Spleen (tissue), 13 donors: ENCODE measurements at regions of chr16 and their contacts with region 1.

Region 1: GRCh38 chr16:2500918-2501750 is 12.6 kb upstream of the ATP6V0C start:
- DNase-seq: peak; percentile 95
- H3K4me3 ChIP-seq: peak overlapping the region in 3 of 8 donors; percentile 15 to 57 (median 22)
- H3K27ac ChIP-seq: peak overlapping the region in 2 of 8 donors; percentile 0 to 32
- H3K4me1 ChIP-seq: peaks cover 10 to 46% (median 24%) of the 10 kb centered on the region in 6 donors
- H3K27me3 ChIP-seq: no peaks in the 10 kb centered on the region
- CTCF ChIP-seq: peak; percentile 96 to 100 (median 99)
- POLR2A ChIP-seq: no peak

Region 2: DNA sequence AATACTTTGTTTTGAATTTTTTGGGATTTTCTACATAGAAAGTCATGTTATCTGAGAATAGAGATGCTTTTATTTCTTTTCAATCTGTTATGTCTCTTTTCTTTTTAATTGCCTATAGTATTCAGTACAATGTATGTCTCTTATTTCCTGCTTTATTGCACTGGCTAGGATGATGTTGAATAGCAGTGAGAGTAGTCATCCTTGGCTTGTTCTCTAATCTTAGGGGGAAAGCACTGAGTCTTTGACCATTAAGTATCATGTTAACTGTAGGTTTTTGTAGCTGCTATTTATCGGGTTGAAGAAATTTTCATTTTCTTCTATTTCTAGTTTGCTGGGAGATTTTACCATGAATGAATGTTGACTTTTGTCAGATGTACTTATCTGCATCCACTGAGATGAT is 150.6 kb before region 1 on chr16:
- intact Hi-C with region 1: loop called (anchors 5 kb)
- DNase-seq: no peak
- H3K4me3 ChIP-seq: no peak overlapping the region
- H3K27ac ChIP-seq: no peak overlapping the region
- H3K4me1 ChIP-seq: no peaks in the 10 kb centered on the region
- H3K27me3 ChIP-seq: peaks cover 0 to 24% (median 0%) of the 10 kb centered on the region in 7 donors
- CTCF ChIP-seq: no peak
- POLR2A ChIP-seq: no peak

Region 3: DNA sequence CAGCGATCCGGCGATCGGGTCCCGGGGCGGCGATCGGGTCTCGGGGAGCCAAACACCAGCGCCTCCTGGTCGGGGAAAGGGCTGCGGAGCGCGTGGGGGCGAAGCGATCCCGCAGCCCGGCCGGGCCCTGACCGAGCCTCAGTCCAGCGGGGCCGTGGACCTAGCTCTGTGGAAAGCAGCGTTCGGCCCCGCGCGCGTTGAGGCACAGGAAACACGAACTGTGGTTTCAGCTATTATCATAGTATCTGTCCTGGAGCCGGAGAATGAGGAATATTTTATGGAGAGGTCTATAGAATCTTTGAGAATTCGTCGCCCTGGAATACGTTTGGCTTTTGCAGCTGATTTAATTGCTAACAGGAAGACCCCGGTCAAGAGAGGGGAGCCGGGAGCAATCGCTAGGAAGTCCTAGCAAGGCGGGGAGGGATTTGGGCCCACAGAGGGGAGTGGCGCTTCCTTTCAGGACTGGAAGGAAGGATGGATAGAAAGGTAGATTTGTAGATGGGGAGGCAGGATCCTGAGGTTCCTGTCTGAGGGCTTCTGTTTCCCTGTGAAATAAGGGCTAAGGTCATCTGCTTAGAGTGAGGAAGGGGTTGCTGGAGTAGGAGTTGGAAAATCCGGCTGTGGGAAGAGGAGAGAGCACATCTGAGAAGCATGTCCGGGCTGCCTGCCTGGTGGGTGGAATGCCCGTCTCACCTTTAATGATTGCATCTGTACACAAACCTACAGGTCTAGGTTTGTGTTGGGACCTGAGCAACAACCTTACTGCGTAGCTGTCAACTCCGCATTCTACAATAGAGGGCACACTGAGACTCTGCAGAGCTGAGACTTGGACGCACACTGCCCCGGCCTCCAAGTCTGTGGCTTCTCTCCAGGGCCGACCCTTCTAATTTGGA is 71.1 kb before region 1 on chr16:
- intact Hi-C with region 1: loop called (anchors 10 kb)
- DNase-seq: peak; percentile 70
- H3K4me3 ChIP-seq: peak overlapping the region; percentile 55 to 92 (median 86)
- H3K27ac ChIP-seq: peak overlapping the region in 7 of 8 donors; percentile 58 to 89 (median 79)
- H3K4me1 ChIP-seq: peaks cover 7 to 33% (median 21%) of the 10 kb centered on the region in 6 donors
- H3K27me3 ChIP-seq: no peaks in the 10 kb centered on the region
- CTCF ChIP-seq: peak in 2 of 11 experiments; percentile 6 to 21
- POLR2A ChIP-seq: no peak